ENCODE measurements at regions of chr5 and their contacts with region 1.

Region 1: GRCh38 chr5:72138943-72139521 is 31.8 kb downstream of the MAP1B start:
- ATAC-seq: peak in 1 of 8 experiments; percentile 8
- H3K4me3 ChIP-seq: no peak overlapping the region
- H3K27ac ChIP-seq: no peak overlapping the region
- H3K4me1 ChIP-seq: peaks cover 58 to 59% of the 10 kb centered on the region in 2 donors

Region 2: DNA sequence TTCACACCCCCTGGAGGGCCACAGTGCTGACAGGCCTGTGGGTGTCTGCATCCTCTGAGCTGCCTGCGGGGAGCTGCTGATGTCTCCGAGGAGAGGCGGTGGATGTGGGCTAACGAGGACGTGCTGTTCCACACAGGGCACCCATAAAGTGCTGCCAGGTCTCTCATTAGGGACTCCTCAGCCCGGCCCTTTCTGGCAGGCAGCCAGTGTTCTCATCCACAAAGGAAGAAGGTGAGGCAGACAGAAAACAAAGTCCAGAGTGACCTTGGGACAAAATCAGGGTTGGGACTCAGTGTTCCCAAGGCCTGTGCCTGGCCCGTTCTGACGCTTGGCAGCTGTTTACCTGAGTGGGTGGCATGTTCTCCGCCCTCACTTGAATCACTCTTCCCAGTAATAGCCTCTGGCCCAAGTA is 390.7 kb before region 1 on chr5:
- in situ Hi-C with region 1: no loop called
- ATAC-seq: no peak
- H3K4me3 ChIP-seq: no peak overlapping the region
- H3K27ac ChIP-seq: no peak overlapping the region
- H3K4me1 ChIP-seq: no peaks in the 10 kb centered on the region

Region 3: GRCh38 chr5:71949778-71950177 is 189.3 kb before region 1 on chr5:
- in situ Hi-C with region 1: no loop called
- ATAC-seq: peak in 3 of 8 experiments; percentile 47 to 94 (median 64)
- H3K4me3 ChIP-seq: no peak overlapping the region
- H3K27ac ChIP-seq: no peak overlapping the region
- H3K4me1 ChIP-seq: no peaks in the 10 kb centered on the region

Region 4: GRCh38 chr5:72307968-72308852 is 169.2 kb after region 1 on chr5:
- in situ Hi-C with region 1: loop called in 2 of 9 experiments (anchors 25 kb)
- ATAC-seq: peak; percentile 95 to 98 (median 97)
- H3K4me3 ChIP-seq: peak overlapping the region; percentile 43 to 69 (median 59)
- H3K27ac ChIP-seq: peak overlapping the region; percentile 78 to 88
- H3K4me1 ChIP-seq: peaks cover 9 to 15% of the 10 kb centered on the region in 2 donors

Region 5: GRCh38 chr5:72847989-72848473 is 709.0 kb after region 1 on chr5:
- in situ Hi-C with region 1: loop called in 1 of 9 experiments (anchors 25 kb)
- ATAC-seq: peak; percentile 75 to 87 (median 80)
- H3K4me3 ChIP-seq: peak overlapping the region; percentile 68 to 89 (median 72)
- H3K27ac ChIP-seq: peak overlapping the region; percentile 87 to 93
- H3K4me1 ChIP-seq: peaks cover 3 to 32% of the 10 kb centered on the region in 2 donors